Calu3 (cell line): ENCODE measurements at regions of chr2 and their contacts with region 1.

Region 1: DNA sequence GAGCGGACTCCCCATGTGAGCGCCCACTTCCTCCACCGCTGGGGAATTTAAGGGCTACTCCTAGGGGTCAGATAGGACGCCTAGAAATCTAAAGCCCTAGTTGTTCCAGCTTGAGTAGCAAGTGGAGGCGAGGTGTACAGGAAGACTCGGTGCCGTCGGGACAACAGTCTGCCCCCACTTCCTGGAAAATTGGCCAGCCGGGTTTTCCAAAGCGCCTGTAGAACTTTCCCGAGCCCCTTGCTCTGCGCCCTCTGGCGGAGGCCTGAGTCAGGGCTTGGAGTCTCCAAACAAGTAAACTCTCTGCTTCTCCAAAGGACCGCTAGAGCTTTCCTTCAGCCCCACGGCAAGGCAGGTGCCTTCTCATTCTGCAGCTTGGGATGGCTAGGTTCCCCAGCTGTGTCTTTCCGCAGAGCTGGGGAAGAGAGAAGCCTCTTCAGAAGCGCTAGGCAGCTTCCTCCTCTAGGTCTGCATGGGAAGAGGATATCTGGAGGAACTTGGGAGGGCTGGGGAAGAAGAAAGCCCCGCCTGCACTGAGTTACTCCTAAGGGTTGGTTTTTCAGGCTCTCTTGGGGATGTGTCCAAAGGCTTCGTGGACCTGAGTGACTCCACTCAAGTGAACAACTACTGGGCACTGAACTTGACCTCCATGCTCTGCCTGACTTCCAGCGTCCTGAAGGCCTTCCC is 688 bp downstream of the SPR start:
- DNase-seq: peak; percentile 93
- H3K4me3 Mint-ChIP-seq: peak overlapping the region; percentile 76
- H3K27ac Mint-ChIP-seq: no peak overlapping the region
- H3K4me1 Mint-ChIP-seq: peaks cover 37% of the 10 kb centered on the region
- H3K27me3 Mint-ChIP-seq: peaks cover 14% of the 10 kb centered on the region
- CTCF ChIP-seq: peak; percentile 82

Region 2: GRCh38 chr2:72917138-72917871 is 29.4 kb after region 1 on chr2 and contains the start of gene EMX1:
- CTCF ChIA-PET with region 1: interaction called, 10 read pairs
- intact Hi-C with region 1: no loop called
- DNase-seq: peak; percentile 81
- H3K4me3 Mint-ChIP-seq: peak within 1 kb of the TSS; percentile 68
- H3K27ac Mint-ChIP-seq: no peak within 1 kb of the TSS
- H3K4me1 Mint-ChIP-seq: peaks cover 6% of the 10 kb centered on the region
- H3K27me3 Mint-ChIP-seq: peaks cover 82% of the 10 kb centered on the region
- CTCF ChIP-seq: no peak
- total RNA-seq, gene EMX1: not detected in 2 replicates

Region 3: DNA sequence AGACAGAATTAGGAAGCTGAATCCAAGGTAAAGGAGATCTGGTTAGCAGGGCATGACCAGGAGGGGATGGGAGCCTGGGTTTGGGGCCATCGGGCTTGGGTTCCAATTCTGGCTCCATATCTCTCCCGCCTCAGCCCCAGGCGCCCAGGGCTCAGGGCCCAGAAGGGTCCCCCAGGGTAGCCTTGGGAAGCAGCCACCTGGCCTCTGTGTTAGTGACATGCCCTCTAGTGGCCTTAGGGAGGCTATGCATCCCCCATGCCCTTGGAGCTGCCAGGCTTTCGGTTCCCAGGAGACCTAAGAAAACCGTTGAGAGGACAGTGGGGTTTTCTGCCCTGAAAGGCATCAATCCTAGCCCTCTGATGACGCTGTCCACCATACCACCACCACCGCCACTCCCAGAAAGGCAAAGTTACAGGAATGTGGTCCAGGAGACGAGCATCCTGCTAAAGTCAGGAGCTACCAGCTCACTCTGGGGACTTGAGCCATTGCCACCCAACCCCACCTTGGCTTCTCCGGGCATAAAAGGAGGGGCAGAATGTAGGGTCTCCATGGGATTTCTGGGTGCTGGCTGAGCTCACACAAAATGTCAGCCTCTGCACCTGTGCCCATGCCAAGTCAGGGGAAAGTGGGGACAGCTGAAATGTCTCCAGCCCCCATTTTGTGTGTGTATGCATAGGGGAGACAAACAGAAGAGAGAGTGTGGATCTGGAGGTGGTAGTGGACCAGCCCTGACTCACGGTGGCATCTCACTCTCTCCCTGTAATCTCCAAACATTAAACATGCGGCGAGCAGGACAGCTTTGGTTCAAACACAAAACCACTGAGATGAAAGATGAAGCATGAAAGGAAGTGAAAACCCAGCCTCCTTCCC is 85.9 kb after region 1 on chr2:
- CTCF ChIA-PET with region 1: interaction called, 36 read pairs
- intact Hi-C with region 1: loop called (anchors 1 kb)
- DNase-seq: peak; percentile 58
- H3K4me3 Mint-ChIP-seq: no peak overlapping the region
- H3K27ac Mint-ChIP-seq: no peak overlapping the region
- H3K4me1 Mint-ChIP-seq: no peaks in the 10 kb centered on the region
- H3K27me3 Mint-ChIP-seq: peaks cover 12% of the 10 kb centered on the region
- CTCF ChIP-seq: peak; percentile 84

Region 4: GRCh38 chr2:73176881-73177644 is 289.2 kb after region 1 on chr2:
- CTCF ChIA-PET with region 1: interaction called, 22 read pairs
- intact Hi-C with region 1: loop called (anchors 2 kb)
- DNase-seq: peak; percentile 94
- H3K4me3 Mint-ChIP-seq: peak overlapping the region; percentile 86
- H3K27ac Mint-ChIP-seq: no peak overlapping the region
- H3K4me1 Mint-ChIP-seq: peaks cover 9% of the 10 kb centered on the region
- H3K27me3 Mint-ChIP-seq: peaks cover 86% of the 10 kb centered on the region
- CTCF ChIP-seq: peak; percentile 95